GM12878 (cell line): ENCODE measurements at regions of chr20 and their contacts with region 1.

Region 1: GRCh38 chr20:62793912-62794724 is 2.2 kb upstream of the MRGBP start:
- DNase-seq: peak; percentile 79
- ATAC-seq: peak; percentile 89
- H3K4me3 ChIP-seq: peak overlapping the region; percentile 76
- H3K27ac ChIP-seq: peak overlapping the region; percentile 71
- H3K4me1 ChIP-seq: peaks cover 19% of the 10 kb centered on the region
- H3K27me3 ChIP-seq: peaks cover 0 to 1% of the 10 kb centered on the region in 2 experiments; a peak in 2 of 4 replicates
- CTCF ChIP-seq: no peak
- EP300 ChIP-seq: no peak
- POLR2A ChIP-seq: peak; percentile 89
- RAD21 ChIP-seq: no peak

Region 2: DNA sequence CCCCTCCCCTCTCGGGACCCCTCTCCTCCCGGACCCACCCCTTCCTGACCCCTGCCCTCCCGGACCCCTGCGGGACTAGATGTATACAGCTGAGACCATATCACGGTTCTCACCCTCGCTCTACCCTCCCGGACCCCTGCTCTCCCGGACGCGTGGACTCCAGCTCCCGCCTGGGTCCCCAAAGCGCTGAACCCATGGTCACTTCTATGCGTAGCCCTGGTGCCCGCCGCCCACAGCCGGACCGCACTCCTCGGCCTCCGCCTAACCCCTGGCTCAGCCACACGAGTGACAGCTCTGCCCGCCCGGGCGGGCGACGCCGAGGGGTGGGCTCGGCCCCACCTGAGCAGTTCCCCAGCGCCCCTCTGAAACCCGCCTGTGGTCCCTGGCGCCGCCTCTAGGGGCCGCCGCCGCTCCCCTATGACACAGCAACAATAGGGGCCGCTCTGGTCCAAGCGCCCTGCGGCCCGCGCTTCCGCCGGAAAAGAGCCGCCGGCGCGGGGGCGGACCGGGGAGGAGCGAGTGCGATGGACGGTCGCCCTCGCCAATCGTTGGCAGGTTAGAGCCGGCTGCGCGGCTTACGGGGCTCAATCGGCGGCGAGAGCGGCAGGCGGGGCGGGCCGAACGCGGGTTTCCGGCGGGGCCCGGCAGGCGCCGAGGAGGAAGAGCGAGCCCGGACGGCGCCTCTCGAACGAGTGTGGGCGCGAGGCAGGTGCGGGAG is 491.6 kb before region 1 on chr20 and contains the start of gene ADRM1:
- CTCF ChIA-PET with region 1: interaction called, 3 read pairs
- POLR2A ChIA-PET with region 1: no interaction called
- RAD21 ChIA-PET with region 1: no interaction called
- SMC1A ChIA-PET with region 1: interaction called, 3 read pairs
- in situ Hi-C with region 1: no loop called
- intact Hi-C with region 1: loop called (anchors 5 kb)
- DNase-seq: peak; percentile 76
- ATAC-seq: peak; percentile 93
- H3K4me3 ChIP-seq: peak within 1 kb of the TSS; percentile 82
- H3K27ac ChIP-seq: peak within 1 kb of the TSS; percentile 90
- H3K4me1 ChIP-seq: peaks cover 10% of the 10 kb centered on the region
- H3K27me3 ChIP-seq: no peaks in the 10 kb centered on the region
- CTCF ChIP-seq: peak; percentile 80 to 99 (median 92)
- EP300 ChIP-seq: peak in 1 of 2 experiments; percentile 53; a peak in 1 of 4 replicates
- POLR2A ChIP-seq: peak; percentile 91
- RAD21 ChIP-seq: peak; percentile 64
- polyA plus RNA-seq, gene ADRM1: 3.4 to 13.6 TPM

Region 3: DNA sequence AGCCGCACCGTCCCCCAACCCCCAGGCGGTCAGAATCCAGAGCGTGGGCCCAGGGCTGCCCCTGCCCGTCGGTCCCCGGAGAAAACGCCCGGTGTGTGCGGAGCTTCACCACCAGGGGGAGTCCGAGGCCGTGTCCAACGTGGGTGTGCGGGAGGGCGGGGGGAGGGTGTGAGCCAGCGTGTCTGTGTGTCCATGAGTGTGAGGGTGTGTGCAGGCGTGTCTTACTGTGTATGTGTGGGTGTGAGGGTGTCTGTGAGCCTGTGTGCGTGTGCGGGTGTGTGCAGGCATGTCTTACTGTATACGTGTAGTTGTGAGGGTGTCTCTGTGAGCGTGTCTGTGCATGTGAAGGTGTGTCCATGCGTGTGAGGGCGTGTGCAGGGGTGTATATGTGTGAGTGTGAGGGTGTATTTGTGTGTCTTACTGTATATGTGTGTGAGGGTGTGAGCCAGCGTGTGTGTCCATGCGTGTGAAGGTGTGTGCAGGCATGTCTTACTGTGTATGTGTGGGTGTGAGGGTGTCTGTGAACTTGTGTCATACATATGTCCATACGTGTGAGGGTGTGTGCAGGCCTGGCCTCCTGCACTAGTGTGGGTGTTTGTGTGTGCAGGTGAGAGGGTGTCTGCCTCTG is 293.8 kb before region 1 on chr20:
- CTCF ChIA-PET with region 1: interaction called, 18 read pairs
- POLR2A ChIA-PET with region 1: interaction called, 5 read pairs
- RAD21 ChIA-PET with region 1: interaction called, 10 read pairs
- SMC1A ChIA-PET with region 1: interaction called, 5 read pairs
- in situ Hi-C with region 1: loop called (anchors 5 kb)
- intact Hi-C with region 1: loop called (anchors 2 kb)
- DNase-seq: no peak
- ATAC-seq: peak; percentile 67
- H3K4me3 ChIP-seq: no peak overlapping the region
- H3K27ac ChIP-seq: no peak overlapping the region
- H3K4me1 ChIP-seq: peaks cover 18% of the 10 kb centered on the region
- H3K27me3 ChIP-seq: no peaks in the 10 kb centered on the region
- CTCF ChIP-seq: peak; percentile 80 to 93 (median 92)
- EP300 ChIP-seq: no peak
- POLR2A ChIP-seq: no peak
- RAD21 ChIP-seq: peak; percentile 85

Region 4: GRCh38 chr20:62623488-62624324 is 170.4 kb before region 1 on chr20:
- CTCF ChIA-PET with region 1: interaction called, 16 read pairs
- POLR2A ChIA-PET with region 1: interaction called, 14 read pairs
- RAD21 ChIA-PET with region 1: interaction called, 11 read pairs
- SMC1A ChIA-PET with region 1: interaction called, 4 read pairs
- in situ Hi-C with region 1: loop called (anchors 5 kb)
- intact Hi-C with region 1: loop called (anchors 2 kb)
- DNase-seq: peak; percentile 71
- ATAC-seq: peak; percentile 95
- H3K4me3 ChIP-seq: peak overlapping the region; percentile 38; the same call in 1 of the 2 replicates
- H3K27ac ChIP-seq: peak overlapping the region; percentile 82
- H3K4me1 ChIP-seq: peaks cover 37% of the 10 kb centered on the region
- H3K27me3 ChIP-seq: no peaks in the 10 kb centered on the region
- CTCF ChIP-seq: no peak
- EP300 ChIP-seq: no peak
- POLR2A ChIP-seq: peak; percentile 71
- RAD21 ChIP-seq: no peak

Region 5: DNA sequence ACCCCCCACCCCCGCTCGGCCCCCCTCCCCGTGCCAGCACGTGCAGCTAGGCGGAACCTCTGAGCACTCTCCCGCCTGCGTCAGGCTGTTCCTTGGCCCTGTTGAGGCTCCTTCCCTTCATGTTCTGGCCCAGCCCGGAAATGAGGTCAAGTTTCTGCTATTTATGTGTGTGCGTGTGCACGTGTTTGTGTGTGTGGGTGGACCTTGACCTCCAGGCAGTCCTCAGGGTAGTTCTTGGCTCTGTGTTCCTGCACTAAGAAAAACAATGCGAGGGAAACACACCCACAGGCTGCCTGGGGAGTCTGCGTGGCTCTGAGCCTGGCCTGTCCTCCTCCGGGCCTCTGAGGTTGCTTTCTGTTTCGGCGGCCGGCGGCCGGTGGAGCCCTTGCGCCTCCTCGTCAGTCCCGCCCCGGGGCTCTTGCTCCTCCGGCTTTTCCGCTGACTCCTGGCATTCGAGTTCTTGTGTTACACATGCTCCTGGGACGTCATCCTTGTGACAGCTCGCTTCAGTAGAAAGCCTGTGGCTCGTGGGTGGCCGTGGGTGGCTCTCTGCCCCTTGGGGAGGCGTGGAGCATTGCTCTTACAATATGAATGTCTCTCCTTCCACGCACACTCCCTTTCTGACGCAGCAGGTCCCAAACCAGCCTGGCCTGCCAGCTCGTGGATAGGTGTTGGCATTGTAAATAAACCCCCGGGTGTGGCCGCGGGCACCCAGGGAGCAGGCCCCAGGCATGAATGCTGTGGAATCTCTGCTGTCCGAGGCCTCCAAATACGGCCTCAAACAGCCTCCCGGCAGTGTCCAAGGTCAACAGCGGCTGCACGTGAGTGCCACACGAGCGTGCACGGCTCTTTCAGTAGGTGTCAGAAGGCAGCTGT is 141.8 kb before region 1 on chr20:
- CTCF ChIA-PET with region 1: interaction called, 6 read pairs
- POLR2A ChIA-PET with region 1: interaction called, 6 read pairs
- RAD21 ChIA-PET with region 1: interaction called, 12 read pairs
- SMC1A ChIA-PET with region 1: no interaction called
- in situ Hi-C with region 1: loop called (anchors 10 kb)
- intact Hi-C with region 1: no loop called
- DNase-seq: peak; percentile 85
- ATAC-seq: peak; percentile 84
- H3K4me3 ChIP-seq: peak overlapping the region; percentile 69
- H3K27ac ChIP-seq: peak overlapping the region; percentile 98
- H3K4me1 ChIP-seq: peaks cover 40% of the 10 kb centered on the region
- H3K27me3 ChIP-seq: no peaks in the 10 kb centered on the region
- CTCF ChIP-seq: no peak
- EP300 ChIP-seq: peak; percentile 81 to 88; a peak in 3 of 4 replicates
- POLR2A ChIP-seq: peak; percentile 77
- RAD21 ChIP-seq: no peak

Region 6: GRCh38 chr20:62808211-62808865 is 14.2 kb after region 1 on chr20:
- CTCF ChIA-PET with region 1: interaction called, 43 read pairs
- POLR2A ChIA-PET with region 1: interaction called, 11 read pairs
- RAD21 ChIA-PET with region 1: interaction called, 9 read pairs
- SMC1A ChIA-PET with region 1: interaction called, 4 read pairs
- in situ Hi-C with region 1: no loop called
- intact Hi-C with region 1: no loop called
- DNase-seq: no peak
- ATAC-seq: peak; percentile 77
- H3K4me3 ChIP-seq: no peak overlapping the region
- H3K27ac ChIP-seq: no peak overlapping the region
- H3K4me1 ChIP-seq: peaks cover 18% of the 10 kb centered on the region
- H3K27me3 ChIP-seq: no peaks in the 10 kb centered on the region
- CTCF ChIP-seq: peak; percentile 85 to 91 (median 85)
- EP300 ChIP-seq: no peak
- POLR2A ChIP-seq: no peak
- RAD21 ChIP-seq: peak; percentile 74